PC-9 (cell line): ENCODE measurements at regions of chr21 and their contacts with region 1.

Region 1: GRCh38 chr21:45292399-45293219 is 4.9 kb upstream of the POFUT2 start:
- DNase-seq: peak; percentile 41 to 79
- H3K4me3 ChIP-seq: no peak overlapping the region
- H3K27ac ChIP-seq: no peak overlapping the region
- H3K4me1 ChIP-seq: no peaks in the 10 kb centered on the region
- H3K27me3 ChIP-seq: no peaks in the 10 kb centered on the region
- CTCF ChIP-seq: peak; percentile 87

Region 2: GRCh38 chr21:45064618-45065399 is 227.8 kb before region 1 on chr21:
- CTCF ChIA-PET with region 1: no interaction called
- POLR2A ChIA-PET with region 1: no interaction called
- intact Hi-C with region 1: no loop called
- DNase-seq: no peak
- H3K4me3 ChIP-seq: no peak overlapping the region
- H3K27ac ChIP-seq: no peak overlapping the region
- H3K4me1 ChIP-seq: no peaks in the 10 kb centered on the region
- H3K27me3 ChIP-seq: no peaks in the 10 kb centered on the region
- CTCF ChIP-seq: no peak

Region 3: GRCh38 chr21:45404730-45405270 is 112.2 kb after region 1 on chr21 and contains the start of gene COL18A1:
- CTCF ChIA-PET with region 1: no interaction called
- POLR2A ChIA-PET with region 1: interaction called, 5 read pairs
- intact Hi-C with region 1: loop called (anchors 1 kb)
- DNase-seq: peak in 1 of 2 experiments; percentile 67
- H3K4me3 ChIP-seq: peak within 1 kb of the TSS; percentile 58; the same call in 1 of the 2 replicates
- H3K27ac ChIP-seq: no peak within 1 kb of the TSS
- H3K4me1 ChIP-seq: peaks cover 51% of the 10 kb centered on the region
- H3K27me3 ChIP-seq: no peaks in the 10 kb centered on the region
- CTCF ChIP-seq: no peak
- total RNA-seq, gene COL18A1: 82.4 and 106 TPM in 2 replicates

Region 4: DNA sequence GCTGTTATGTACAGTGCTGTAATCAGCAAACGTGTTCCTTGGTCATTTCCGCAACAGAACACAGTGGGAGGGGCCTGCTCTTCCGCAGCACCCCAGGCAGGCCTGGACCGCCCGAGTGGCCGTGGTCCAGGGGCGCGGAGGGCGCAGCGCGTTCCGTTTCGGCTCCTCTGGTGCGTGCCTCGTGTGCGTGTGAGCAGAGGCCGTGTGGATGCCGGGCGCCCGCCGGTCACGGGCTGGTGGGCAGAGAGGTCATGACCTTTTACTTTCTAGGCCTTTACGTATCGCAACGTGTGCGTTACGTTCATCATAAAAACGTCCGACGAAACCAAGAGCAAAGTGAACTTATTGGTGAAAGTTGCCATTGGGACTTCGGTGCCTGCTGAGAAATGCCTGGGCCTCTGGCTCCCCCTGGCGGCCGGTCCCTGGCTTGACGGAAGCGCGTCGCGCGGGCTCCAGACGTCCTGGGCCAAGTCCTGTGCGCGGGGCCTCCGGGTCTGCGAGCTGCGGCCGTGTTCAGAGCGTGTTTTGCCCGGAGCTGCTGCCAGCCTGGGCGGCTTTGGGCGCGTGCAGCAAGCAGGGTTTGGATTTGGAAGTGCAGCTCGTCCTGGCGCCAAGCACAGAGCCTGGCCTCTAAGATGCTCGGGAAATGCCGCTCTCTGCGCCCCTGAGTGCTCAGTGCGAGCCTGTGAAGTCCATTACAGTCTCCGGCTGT is 146.7 kb after region 1 on chr21:
- CTCF ChIA-PET with region 1: no interaction called
- POLR2A ChIA-PET with region 1: no interaction called
- intact Hi-C with region 1: loop called (anchors 1 kb)
- DNase-seq: peak in 1 of 2 experiments; percentile 67
- H3K4me3 ChIP-seq: no peak overlapping the region
- H3K27ac ChIP-seq: no peak overlapping the region
- H3K4me1 ChIP-seq: no peaks in the 10 kb centered on the region
- H3K27me3 ChIP-seq: no peaks in the 10 kb centered on the region
- CTCF ChIP-seq: peak; percentile 89

Region 5: GRCh38 chr21:45596704-45597318 is 304.2 kb after region 1 on chr21:
- CTCF ChIA-PET with region 1: no interaction called
- POLR2A ChIA-PET with region 1: no interaction called
- intact Hi-C with region 1: loop called (anchors 2 kb)
- DNase-seq: peak in 1 of 2 experiments; percentile 61
- H3K4me3 ChIP-seq: no peak overlapping the region
- H3K27ac ChIP-seq: no peak overlapping the region
- H3K4me1 ChIP-seq: no peaks in the 10 kb centered on the region
- H3K27me3 ChIP-seq: peaks cover 40% of the 10 kb centered on the region
- CTCF ChIP-seq: peak; percentile 77

Region 6: GRCh38 chr21:45820171-45821091 is 527.8 kb after region 1 on chr21:
- CTCF ChIA-PET with region 1: no interaction called
- POLR2A ChIA-PET with region 1: no interaction called
- intact Hi-C with region 1: loop called (anchors 1 kb)
- DNase-seq: peak; percentile 58 to 68
- H3K4me3 ChIP-seq: no peak overlapping the region
- H3K27ac ChIP-seq: no peak overlapping the region
- H3K4me1 ChIP-seq: peaks cover 16% of the 10 kb centered on the region; the same call in 1 of the 2 replicates
- H3K27me3 ChIP-seq: peaks cover 21% of the 10 kb centered on the region
- CTCF ChIP-seq: peak; percentile 81